CD4-positive, alpha-beta T cell (primary cell): ENCODE measurements at regions of chr1 and their contacts with region 1.

Region 1: DNA sequence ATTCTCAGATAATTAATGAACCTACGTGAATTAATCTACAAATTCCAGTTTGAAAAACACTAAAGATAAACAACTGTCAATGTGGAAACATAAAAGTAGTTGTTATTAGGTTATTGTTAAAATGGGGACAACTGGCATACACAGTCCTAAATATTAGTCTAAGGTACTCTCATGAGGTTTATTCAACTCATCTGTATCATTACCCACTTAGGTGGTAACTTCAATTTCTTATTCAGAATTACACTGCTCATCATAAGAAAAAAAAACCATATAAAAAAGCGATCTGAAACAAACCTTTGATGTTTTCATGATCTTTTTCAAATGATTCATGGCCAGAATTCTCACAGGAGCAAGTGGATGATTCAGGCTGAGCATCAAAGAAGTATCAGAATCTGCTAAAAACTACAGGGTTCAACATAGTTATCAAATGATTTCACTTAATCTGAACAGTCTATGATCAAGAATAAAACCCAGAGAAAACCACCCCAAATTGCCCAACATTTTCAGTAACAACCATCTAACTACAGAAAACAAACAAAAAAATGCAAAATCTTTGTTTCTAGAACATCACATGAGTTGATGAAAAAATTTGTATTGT is 13.7 kb downstream of the HEATR1 start:
- DNase-seq: no peak
- ATAC-seq: no peak
- H3K4me3 ChIP-seq: no peak overlapping the region
- H3K4me3 Mint-ChIP-seq: no peak overlapping the region
- H3K27ac ChIP-seq: no peak overlapping the region
- H3K27ac Mint-ChIP-seq: no peak overlapping the region
- H3K4me1 ChIP-seq: no peaks in the 10 kb centered on the region
- H3K4me1 Mint-ChIP-seq: no peaks in the 10 kb centered on the region
- H3K27me3 ChIP-seq: no peaks in the 10 kb centered on the region
- H3K27me3 Mint-ChIP-seq: no peaks in the 10 kb centered on the region
- CTCF ChIP-seq: no peak

Region 2: GRCh38 chr1:236495467-236496112 is 95.1 kb before region 1 on chr1:
- CTCF ChIA-PET with region 1: no interaction called
- POLR2A ChIA-PET with region 1: no interaction called
- intact Hi-C with region 1: no loop called
- DNase-seq: peak in 3 of 14 experiments; percentile 7 to 8 (median 7)
- ATAC-seq: peak; percentile 63
- H3K4me3 ChIP-seq: no peak overlapping the region
- H3K4me3 Mint-ChIP-seq: no peak overlapping the region
- H3K27ac ChIP-seq: no peak overlapping the region
- H3K27ac Mint-ChIP-seq: no peak overlapping the region
- H3K4me1 ChIP-seq: peaks cover 6% of the 10 kb centered on the region
- H3K4me1 Mint-ChIP-seq: peaks cover 9% of the 10 kb centered on the region
- H3K27me3 ChIP-seq: no peaks in the 10 kb centered on the region
- H3K27me3 Mint-ChIP-seq: peaks cover 6% of the 10 kb centered on the region
- CTCF ChIP-seq: no peak

Region 3: DNA sequence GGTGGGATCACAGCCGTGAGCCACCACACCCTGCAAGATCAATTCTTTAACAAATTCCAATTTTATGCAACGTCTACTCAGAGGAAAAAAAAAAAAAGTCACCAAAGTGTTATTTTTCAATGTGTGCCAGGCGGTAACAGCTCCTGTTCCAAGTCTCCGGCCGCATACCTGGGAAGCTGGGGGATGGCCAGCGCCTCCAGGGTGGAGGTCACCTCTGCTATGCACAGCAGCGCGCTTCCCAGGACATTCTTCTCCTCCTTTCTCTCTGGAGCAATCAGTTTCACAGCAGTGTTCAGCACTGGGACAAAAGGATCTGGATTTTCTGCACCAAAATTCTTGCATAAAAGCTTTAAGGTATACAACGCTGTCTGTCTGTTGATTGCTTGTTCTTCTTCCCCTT is 32.6 kb before region 1 on chr1:
- CTCF ChIA-PET with region 1: no interaction called
- POLR2A ChIA-PET with region 1: no interaction called
- intact Hi-C with region 1: loop called in 1 of 2 experiments (anchors 5 kb)
- DNase-seq: no peak
- ATAC-seq: no peak
- H3K4me3 ChIP-seq: no peak overlapping the region
- H3K4me3 Mint-ChIP-seq: no peak overlapping the region
- H3K27ac ChIP-seq: no peak overlapping the region
- H3K27ac Mint-ChIP-seq: no peak overlapping the region
- H3K4me1 ChIP-seq: no peaks in the 10 kb centered on the region
- H3K4me1 Mint-ChIP-seq: no peaks in the 10 kb centered on the region
- H3K27me3 ChIP-seq: no peaks in the 10 kb centered on the region
- H3K27me3 Mint-ChIP-seq: no peaks in the 10 kb centered on the region
- CTCF ChIP-seq: no peak

Region 4: DNA sequence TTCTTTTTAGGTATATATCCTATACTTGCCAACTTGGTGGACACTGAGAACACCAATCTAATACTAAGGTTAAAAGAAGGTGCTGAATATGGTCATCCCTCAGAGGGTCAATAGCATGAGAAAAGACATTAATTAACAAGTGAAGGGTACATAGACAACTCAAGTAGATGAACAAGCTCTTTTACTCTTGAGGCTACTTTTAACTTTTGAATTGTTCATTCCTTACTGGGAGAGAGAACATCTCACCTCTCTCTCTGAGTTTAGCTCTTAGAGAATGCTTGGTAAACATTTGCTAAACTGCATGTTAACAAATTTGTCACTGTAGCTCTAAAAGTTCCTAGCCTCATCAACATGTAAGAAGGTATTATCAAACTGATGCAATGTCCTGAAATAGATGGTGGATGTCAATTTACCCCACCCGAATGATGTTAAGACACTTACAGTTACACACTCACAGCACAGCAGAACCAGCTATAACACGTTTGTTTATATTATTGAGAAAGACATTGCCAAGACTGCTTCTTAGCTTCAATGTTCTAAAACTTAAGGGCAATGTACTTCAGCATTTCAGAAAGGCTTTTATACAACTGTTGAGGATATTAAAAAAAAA is 22.3 kb before region 1 on chr1:
- CTCF ChIA-PET with region 1: no interaction called
- POLR2A ChIA-PET with region 1: no interaction called
- intact Hi-C with region 1: loop called in 1 of 2 experiments (anchors 1 kb)
- DNase-seq: no peak
- ATAC-seq: no peak
- H3K4me3 ChIP-seq: no peak overlapping the region
- H3K4me3 Mint-ChIP-seq: no peak overlapping the region
- H3K27ac ChIP-seq: no peak overlapping the region
- H3K27ac Mint-ChIP-seq: no peak overlapping the region
- H3K4me1 ChIP-seq: no peaks in the 10 kb centered on the region
- H3K4me1 Mint-ChIP-seq: no peaks in the 10 kb centered on the region
- H3K27me3 ChIP-seq: no peaks in the 10 kb centered on the region
- H3K27me3 Mint-ChIP-seq: no peaks in the 10 kb centered on the region
- CTCF ChIP-seq: no peak